ENCODE measurements at regions of chr5 and their contacts with region 1.

Region 1: DNA sequence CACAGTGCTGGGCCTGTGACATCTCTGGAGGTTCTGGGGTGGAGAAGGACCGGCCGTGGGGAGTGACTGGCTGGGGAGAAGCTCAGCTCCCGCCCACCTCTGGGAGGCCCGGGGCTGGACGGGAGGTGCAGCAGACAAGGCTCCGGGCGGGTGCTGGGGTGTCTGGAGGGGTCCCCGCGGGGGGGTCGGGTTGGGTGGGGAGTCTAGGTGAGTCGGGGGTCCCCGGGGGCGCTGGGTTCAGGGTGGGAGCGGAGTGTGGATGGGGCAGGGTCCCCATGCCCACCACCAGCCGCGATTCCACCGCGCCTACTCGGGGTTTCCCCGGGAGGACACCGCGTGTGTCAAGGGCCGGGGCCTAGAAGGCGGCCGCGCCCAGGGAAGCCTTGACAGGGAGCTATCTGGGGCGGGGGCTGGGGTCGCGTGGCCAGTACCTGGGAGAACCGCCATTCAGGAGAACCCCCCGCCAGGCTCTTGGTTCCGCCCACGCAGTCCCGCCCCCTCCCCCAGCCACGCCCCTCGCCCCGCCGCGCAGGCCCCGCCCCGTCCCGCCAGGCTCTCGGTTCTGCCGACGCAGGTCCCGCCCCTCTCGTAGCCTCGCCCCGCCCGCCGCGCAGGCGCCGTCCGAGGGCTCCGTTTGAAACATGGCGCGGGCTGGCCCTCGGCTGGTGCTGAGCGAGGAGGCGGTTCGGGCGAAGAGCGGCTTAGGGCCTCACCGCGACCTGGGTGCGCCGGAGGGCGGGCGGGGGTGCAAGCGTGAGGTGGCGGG is at the start of gene CEP72:
- DNase-seq: peak; percentile 90
- H3K4me3 ChIP-seq: peak within 1 kb of the TSS; percentile 97
- H3K27ac ChIP-seq: peak within 1 kb of the TSS; percentile 20
- H3K4me1 ChIP-seq: peaks cover 21% of the 10 kb centered on the region
- CTCF ChIP-seq: no peak
- total RNA-seq, gene CEP72: 26.9 and 27.2 TPM in 2 replicates

Region 2: GRCh38 chr5:472656-473553 is 139.0 kb before region 1 on chr5:
- CTCF ChIA-PET with region 1: no interaction called
- POLR2A ChIA-PET with region 1: no interaction called
- intact Hi-C with region 1: loop called (anchors 10 kb)
- DNase-seq: peak; percentile 91
- H3K4me3 ChIP-seq: peak overlapping the region; percentile 85
- H3K27ac ChIP-seq: peak overlapping the region; percentile 50
- H3K4me1 ChIP-seq: peaks cover 24% of the 10 kb centered on the region
- CTCF ChIP-seq: no peak

Region 3: DNA sequence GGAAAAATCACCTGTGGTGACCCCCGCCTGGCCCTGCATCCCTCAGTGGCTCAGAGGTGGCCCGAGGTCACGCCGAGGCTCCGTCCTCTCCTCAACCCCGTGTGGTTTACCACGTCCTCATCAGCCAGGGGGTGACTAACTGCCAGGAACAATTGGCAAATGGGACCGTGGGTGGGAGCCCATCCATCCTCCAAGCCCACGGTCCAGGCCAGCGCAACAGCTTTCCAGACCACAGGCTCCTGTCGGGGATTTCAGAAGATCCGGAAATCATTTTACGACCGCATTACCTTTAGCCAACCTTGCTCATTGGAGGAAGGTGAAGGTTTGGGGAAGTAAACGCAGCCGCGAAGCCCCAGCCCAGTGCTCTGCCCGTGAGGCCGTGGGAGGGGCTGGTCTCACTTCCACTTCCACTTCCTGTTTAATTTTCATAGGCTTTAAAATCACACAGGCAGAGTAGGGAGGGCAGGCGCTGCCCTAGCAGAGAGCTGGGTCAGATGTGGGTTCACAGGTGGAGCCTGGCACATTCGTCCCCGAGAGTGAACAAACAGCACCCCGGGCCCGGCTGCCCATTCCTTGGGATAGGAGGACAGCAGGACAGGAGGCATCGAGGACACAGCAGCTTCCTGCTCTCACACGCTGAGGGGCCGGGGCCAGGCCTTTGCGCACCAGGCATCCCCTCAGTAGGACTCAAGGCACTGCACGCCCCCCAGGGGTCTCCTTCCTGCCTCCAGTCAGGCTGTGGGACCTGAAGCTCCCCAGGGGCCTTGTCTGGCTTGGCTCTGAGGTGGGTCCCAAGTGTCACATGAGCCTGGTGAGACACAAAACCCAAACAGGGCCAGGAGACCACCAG is 67.9 kb before region 1 on chr5:
- CTCF ChIA-PET with region 1: no interaction called
- POLR2A ChIA-PET with region 1: interaction called, 3 read pairs
- intact Hi-C with region 1: loop called (anchors 1 kb)
- DNase-seq: peak; percentile 90
- H3K4me3 ChIP-seq: peak overlapping the region; percentile 33
- H3K27ac ChIP-seq: peak overlapping the region; percentile 48
- H3K4me1 ChIP-seq: peaks cover 16% of the 10 kb centered on the region
- CTCF ChIP-seq: no peak

Measured in OCI-LY7 (cell line).